ENCODE measurements at regions of chr11 and their contacts with region 1.

Region 1: GRCh38 chr11:11137339-11137738 is 215.7 kb downstream of the CSNK2A3 start:
- DNase-seq: no peak
- H3K4me3 Mint-ChIP-seq: no peak overlapping the region
- H3K27ac Mint-ChIP-seq: peak overlapping the region; percentile 69
- H3K4me1 Mint-ChIP-seq: peaks cover 17% of the 10 kb centered on the region
- H3K27me3 Mint-ChIP-seq: no peaks in the 10 kb centered on the region

Region 2: GRCh38 chr11:11148104-11148509 is 10.8 kb after region 1 on chr11:
- CTCF ChIA-PET with region 1: no interaction called
- POLR2A ChIA-PET with region 1: no interaction called
- intact Hi-C with region 1: loop called (anchors 1 kb)
- DNase-seq: peak; percentile 58
- H3K4me3 Mint-ChIP-seq: no peak overlapping the region
- H3K27ac Mint-ChIP-seq: no peak overlapping the region
- H3K4me1 Mint-ChIP-seq: peaks cover 37% of the 10 kb centered on the region
- H3K27me3 Mint-ChIP-seq: no peaks in the 10 kb centered on the region

Region 3: DNA sequence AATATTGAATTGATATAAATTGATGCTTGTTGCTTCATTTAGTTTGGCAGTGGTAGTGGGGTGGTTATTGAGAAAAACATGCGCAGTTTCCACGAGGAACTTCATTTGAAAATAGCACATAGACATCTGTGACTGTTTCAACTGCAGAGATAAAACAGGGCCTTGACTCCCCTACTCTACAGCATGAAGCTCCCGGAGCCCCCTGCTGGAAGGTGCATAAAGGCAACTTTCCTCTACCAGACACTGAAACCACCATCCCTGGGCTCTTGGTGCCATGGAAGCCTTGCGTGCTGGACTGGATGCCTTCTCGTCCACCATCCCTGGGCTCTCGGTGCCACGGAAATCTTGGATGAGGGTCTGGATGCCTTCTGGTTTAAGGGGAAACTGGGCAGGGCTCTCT is 19.8 kb after region 1 on chr11:
- CTCF ChIA-PET with region 1: interaction called, 11 read pairs
- POLR2A ChIA-PET with region 1: no interaction called
- intact Hi-C with region 1: no loop called
- DNase-seq: peak; percentile 59
- H3K4me3 Mint-ChIP-seq: no peak overlapping the region
- H3K27ac Mint-ChIP-seq: no peak overlapping the region
- H3K4me1 Mint-ChIP-seq: peaks cover 14% of the 10 kb centered on the region
- H3K27me3 Mint-ChIP-seq: peaks cover 2% of the 10 kb centered on the region

Region 4: GRCh38 chr11:11189506-11189905 is 52.2 kb after region 1 on chr11:
- CTCF ChIA-PET with region 1: no interaction called
- POLR2A ChIA-PET with region 1: no interaction called
- intact Hi-C with region 1: no loop called
- DNase-seq: no peak
- H3K4me3 Mint-ChIP-seq: no peak overlapping the region
- H3K27ac Mint-ChIP-seq: no peak overlapping the region
- H3K4me1 Mint-ChIP-seq: no peaks in the 10 kb centered on the region
- H3K27me3 Mint-ChIP-seq: peaks cover 5% of the 10 kb centered on the region

Measured in activated CD4-positive, alpha-beta memory T cell treated with anti-CD3 and anti-CD28 coated beads for 36 hours (primary cell).